ENCODE measurements at regions of chr1 and their contacts with region 1.

Region 1: GRCh38 chr1:93846211-93846991 is 32.6 kb downstream of the DNTTIP2 start:
- DNase-seq: no peak
- ATAC-seq: peak; percentile 80
- H3K4me3 ChIP-seq: peak overlapping the region; percentile 69 to 74
- H3K27ac ChIP-seq: peak overlapping the region; percentile 55
- H3K4me1 ChIP-seq: peaks cover 11% of the 10 kb centered on the region; the same call in 1 of the 2 replicates
- H3K27me3 ChIP-seq: no peaks in the 10 kb centered on the region
- CTCF ChIP-seq: peak; percentile 51

Region 2: DNA sequence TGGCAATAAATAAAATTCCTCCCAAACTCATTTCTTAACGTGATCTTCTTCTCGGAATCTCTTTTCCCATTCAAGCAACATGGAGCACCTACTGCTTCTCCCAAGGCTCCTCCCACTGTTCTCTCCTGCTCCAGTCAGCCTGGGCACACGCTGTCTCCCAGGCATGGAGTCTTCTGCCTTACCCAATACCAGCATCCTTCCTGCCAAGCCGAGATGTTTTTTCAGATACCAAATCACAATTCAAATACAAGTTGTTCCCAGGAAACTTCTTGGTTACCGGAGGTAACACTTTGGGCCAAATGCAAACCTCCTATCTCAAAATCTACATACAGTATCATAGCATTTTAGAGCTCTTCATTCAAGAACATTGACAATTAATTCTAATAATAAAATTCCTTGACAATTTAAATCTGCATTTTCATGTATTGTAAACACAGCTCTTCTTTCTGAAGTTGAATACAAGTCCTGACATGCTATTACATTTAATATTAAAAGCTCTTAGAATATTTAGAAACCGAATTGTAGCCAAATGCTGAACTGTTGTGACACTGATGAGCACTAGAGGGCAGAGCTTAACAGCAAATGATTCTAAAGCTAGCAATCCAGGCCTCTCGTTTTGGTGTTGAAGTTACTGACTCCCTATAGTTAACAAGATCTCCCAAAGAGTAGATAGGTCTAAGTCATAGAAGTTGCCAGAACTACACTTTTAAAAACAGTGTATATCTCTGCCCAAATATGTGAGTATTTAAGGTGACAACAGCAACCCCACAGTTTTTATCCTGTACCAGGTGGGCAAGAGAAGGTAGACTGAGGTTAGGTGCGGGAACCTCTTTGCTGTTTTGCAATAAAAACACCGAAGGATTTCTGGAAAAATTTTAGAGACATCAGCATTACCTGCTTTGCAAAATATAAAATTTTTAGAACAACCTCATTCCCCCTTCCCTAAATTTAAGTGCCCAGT is 217.0 kb before region 1 on chr1:
- CTCF ChIA-PET with region 1: interaction called, 13 read pairs
- POLR2A ChIA-PET with region 1: no interaction called
- in situ Hi-C with region 1: no loop called
- intact Hi-C with region 1: loop called (anchors 10 kb)
- DNase-seq: peak; percentile 60
- ATAC-seq: peak; percentile 83
- H3K4me3 ChIP-seq: no peak overlapping the region
- H3K27ac ChIP-seq: peak overlapping the region; percentile 65
- H3K4me1 ChIP-seq: peaks cover 43% of the 10 kb centered on the region
- H3K27me3 ChIP-seq: no peaks in the 10 kb centered on the region
- CTCF ChIP-seq: peak; percentile 67; the same call in 1 of the 2 replicates

Region 3: DNA sequence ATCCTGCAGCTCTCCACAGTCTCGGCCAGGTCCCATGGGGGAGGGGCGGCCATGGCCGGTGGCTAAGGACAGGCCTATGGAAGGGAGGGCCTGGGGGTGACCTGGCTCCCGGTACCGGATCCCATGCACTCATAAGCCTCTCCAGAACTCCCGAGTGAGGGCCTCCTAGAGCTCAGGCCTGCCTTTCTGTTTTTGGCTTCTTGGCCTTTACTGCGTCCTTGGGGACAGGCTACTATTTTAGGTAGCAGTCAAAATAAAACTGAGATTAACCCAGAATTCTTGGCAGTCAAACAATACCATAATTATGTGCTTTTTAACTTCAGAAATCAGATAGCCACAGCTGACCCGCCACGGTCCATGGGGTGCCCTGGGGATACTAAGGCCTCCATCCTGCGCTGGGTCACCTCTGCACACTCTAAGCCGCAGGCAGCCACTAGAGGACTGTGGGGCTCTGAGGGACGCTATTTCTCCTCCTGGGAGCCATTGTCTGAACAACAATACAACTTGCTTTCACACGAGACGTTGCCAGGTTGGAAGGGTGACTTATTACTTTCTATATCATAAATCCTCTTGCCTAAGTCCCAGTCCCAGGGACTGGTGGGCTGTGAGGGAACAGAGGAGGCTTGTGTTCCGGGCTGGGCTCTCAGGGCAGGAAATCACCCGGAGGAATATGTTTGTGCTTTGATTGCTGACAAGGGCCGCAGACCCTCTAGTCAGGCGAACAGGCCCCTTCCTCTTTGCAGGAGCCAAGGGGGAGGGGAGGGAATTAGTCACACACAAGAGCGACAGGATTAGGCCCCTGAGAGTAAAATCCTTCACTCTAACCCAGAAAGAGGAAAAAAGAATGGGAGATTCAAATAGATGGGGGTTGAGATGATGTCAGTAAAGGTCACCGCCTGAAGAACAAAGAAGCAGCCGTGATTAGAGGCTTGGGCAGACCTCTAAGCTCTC is 124.0 kb before region 1 on chr1:
- CTCF ChIA-PET with region 1: no interaction called
- POLR2A ChIA-PET with region 1: no interaction called
- in situ Hi-C with region 1: no loop called
- intact Hi-C with region 1: no loop called
- DNase-seq: no peak
- ATAC-seq: peak; percentile 77
- H3K4me3 ChIP-seq: no peak overlapping the region
- H3K27ac ChIP-seq: peak overlapping the region; percentile 44; the same call in 1 of the 2 replicates
- H3K4me1 ChIP-seq: peaks cover 9% of the 10 kb centered on the region
- H3K27me3 ChIP-seq: no peaks in the 10 kb centered on the region
- CTCF ChIP-seq: no peak

Region 4: DNA sequence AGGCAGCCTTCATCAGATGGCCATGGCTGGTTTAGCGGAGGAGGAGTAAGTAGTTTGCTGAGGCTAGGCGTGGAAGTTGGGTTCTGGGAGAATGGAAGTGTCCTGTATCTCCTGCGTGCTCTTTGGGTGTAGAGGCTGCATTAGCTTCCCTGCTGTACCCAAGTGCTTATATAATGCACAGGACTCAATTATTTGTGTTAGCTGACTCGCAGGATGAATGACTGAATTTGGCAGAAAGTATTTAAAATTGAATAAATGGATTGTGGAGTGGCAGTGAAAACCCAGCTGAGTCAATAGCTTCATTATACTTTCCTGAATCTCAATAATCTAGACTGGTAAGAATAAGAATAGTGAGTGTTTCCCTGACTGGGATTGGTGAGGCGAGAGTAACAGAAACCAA is 18.9 kb after region 1 on chr1:
- CTCF ChIA-PET with region 1: no interaction called
- POLR2A ChIA-PET with region 1: no interaction called
- in situ Hi-C with region 1: no loop called
- intact Hi-C with region 1: no loop called
- DNase-seq: no peak
- ATAC-seq: no peak
- H3K4me3 ChIP-seq: no peak overlapping the region
- H3K27ac ChIP-seq: no peak overlapping the region
- H3K4me1 ChIP-seq: no peaks in the 10 kb centered on the region
- H3K27me3 ChIP-seq: no peaks in the 10 kb centered on the region
- CTCF ChIP-seq: no peak

Measured in Panc1 (cell line).